Breast epithelium (tissue), 4 donors: ENCODE measurements at regions of chr22 and their contacts with region 1.

Region 1: DNA sequence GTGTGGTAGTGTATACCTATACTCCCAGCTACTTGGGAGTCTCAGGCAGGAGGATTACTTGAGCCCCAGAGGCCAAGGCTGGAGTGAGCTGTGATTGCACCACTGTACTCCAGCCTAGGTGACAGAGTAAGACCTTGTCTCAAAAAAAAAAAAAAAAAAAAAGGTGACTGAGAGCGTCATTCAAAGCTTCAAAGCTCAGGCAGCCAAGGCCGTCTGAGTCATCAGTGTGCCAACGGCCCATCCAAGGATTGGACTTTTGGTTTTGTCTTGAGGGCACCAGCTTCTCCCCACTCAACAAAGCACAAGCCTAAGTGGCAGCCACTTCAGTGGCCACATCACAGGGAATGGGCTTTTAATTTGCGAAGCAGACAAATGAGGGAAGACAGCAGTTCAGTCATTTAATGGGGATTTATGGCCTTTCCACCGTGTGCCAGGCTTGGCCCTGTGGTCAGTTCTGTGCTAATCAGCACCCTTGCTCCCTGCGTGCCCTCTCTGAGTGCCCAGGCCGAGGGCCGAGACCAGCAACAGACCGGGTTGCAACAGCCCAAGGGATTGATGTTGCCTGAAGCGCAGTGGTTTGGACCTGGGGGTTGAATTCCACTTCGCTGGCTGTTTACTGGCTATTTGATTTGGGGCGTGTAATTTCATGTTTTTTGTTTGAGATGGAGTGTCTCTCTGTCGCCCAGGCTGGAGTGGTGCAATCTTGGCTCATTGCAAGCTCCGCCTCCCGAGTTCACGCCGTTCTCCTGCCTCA is 30.2 kb upstream of the CRYBB3 start:
- DNase-seq: no peak
- H3K4me3 ChIP-seq: no peak overlapping the region
- H3K27ac ChIP-seq: peak overlapping the region; percentile 56 to 62
- H3K4me1 ChIP-seq: peaks cover 0 to 5% of the 10 kb centered on the region in 2 donors
- H3K27me3 ChIP-seq: no peaks in the 10 kb centered on the region
- CTCF ChIP-seq: no peak
- POLR2A ChIP-seq: no peak

Region 2: DNA sequence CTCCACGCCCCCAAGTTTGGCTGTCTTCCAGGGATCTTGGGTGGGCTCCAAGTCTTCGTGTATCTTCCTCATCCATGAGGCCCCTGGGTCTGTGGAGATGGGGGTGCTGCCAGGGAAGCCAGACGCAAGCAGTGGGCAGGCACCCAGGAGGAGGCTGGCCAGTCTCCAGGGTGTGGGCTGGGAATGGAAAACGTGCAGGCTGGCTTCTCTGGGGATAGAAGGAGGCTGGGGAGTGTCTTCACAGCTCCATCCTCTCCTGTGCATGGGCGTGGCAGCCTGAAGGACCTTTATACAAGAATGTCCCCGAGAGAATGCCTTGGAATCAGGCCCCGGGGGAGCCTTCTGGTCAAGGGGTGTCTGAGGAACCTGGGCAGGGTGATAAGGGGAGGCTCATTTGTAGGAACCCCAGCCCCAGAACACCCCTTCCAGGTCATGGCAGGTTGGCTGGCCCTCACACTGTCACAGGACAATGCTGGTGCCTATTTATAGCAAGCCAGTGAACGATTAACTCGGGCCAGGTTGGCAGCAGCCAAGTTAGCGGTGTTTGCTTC is 349.5 kb before region 1 on chr22:
- intact Hi-C with region 1: no loop called
- DNase-seq: peak in 1 of 2 donors; percentile 56
- H3K4me3 ChIP-seq: no peak overlapping the region
- H3K27ac ChIP-seq: no peak overlapping the region
- H3K4me1 ChIP-seq: peaks cover 0 to 7% of the 10 kb centered on the region in 2 donors
- H3K27me3 ChIP-seq: no peaks in the 10 kb centered on the region
- CTCF ChIP-seq: no peak
- POLR2A ChIP-seq: no peak

Region 3: GRCh38 chr22:25110846-25111578 is 58.4 kb before region 1 on chr22:
- intact Hi-C with region 1: loop called (anchors 10 kb)
- DNase-seq: peak; percentile 83 to 85
- H3K4me3 ChIP-seq: peak overlapping the region; percentile 40 to 71 (median 68)
- H3K27ac ChIP-seq: peak overlapping the region; percentile 94 to 95
- H3K4me1 ChIP-seq: peaks cover 0 to 11% of the 10 kb centered on the region in 2 donors
- H3K27me3 ChIP-seq: no peaks in the 10 kb centered on the region
- CTCF ChIP-seq: peak; percentile 51 to 74 (median 71)
- POLR2A ChIP-seq: no peak